ENCODE measurements at regions of chr3 and their contacts with region 1.

Region 1: GRCh38 chr3:147391781-147392624 is 14.3 kb downstream of the ZIC4 start:
- DNase-seq: no peak
- H3K4me3 ChIP-seq: peak overlapping the region; percentile 34 to 37
- H3K27ac ChIP-seq: no peak overlapping the region
- H3K4me1 ChIP-seq: peaks cover 0 to 19% of the 10 kb centered on the region in 2 donors
- H3K27me3 ChIP-seq: peaks cover 45% of the 10 kb centered on the region
- CTCF ChIP-seq: no peak

Region 2: GRCh38 chr3:148075763-148076716 is 684.0 kb after region 1 on chr3:
- intact Hi-C with region 1: loop called (anchors 10 kb)
- DNase-seq: no peak
- H3K4me3 ChIP-seq: no peak overlapping the region
- H3K27ac ChIP-seq: no peak overlapping the region
- H3K4me1 ChIP-seq: no peaks in the 10 kb centered on the region
- H3K27me3 ChIP-seq: no peaks in the 10 kb centered on the region
- CTCF ChIP-seq: peak in 2 of 3 experiments; percentile 27 to 63

Measured in ascending aorta (tissue), 2 donors.